Activated CD4-positive, alpha-beta T cell treated with anti-CD3 and anti-CD28 coated beads, Interleukin-2, amount 10 ng/mL, durations not matched to agents 24 days and 14 days (primary cell): ENCODE measurements at regions of chr3 and their contacts with region 1.

Region 1: GRCh38 chr3:56251343-56251945 is 216.8 kb downstream of the ERC2 start:
- DNase-seq: peak; percentile 71
- H3K4me3 Mint-ChIP-seq: no peak overlapping the region
- H3K27ac Mint-ChIP-seq: no peak overlapping the region
- H3K4me1 Mint-ChIP-seq: peaks cover 1% of the 10 kb centered on the region
- H3K27me3 Mint-ChIP-seq: peaks cover 12% of the 10 kb centered on the region

Region 2: DNA sequence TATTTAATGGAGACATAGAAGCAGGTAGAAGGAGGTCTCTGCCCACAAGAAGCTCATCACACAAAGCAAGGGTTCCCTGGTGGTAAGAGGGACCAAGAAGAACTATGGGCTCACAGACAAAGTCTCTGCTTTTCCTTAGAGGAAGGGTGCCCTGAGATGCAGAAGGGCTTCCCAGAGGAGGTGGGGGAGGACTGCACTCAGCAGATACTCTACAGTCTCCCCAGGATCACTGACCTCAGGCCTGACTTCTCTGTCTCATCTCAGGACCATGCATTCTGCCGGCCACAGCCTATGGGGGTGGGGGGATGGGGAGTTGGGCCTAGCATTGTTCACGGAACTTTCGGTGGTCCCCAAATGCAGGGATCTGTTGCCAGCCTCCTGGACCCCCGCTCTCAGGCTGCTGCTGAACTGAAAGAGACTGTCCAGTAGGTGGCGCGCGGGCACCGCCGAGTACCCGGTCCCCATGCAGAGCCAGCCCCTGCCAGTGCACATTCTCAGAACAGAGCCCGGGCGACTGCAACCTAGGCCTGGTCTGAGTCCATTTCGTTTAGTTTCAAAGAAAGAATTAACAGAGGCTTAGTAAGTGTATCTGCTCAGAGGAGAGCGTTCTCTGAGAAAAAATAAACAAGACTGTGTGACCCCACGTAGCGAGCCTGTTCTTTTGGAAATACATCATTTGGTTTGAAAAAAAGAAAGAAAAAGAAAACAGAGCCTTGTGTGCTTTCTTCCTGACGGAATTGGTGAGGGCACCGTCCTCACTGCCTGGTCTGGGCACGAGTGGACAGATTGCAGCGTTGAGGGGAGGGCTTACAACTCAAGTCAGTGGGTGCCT is 1397.7 kb before region 1 on chr3:
- intact Hi-C with region 1: loop called (anchors 5 kb)
- DNase-seq: peak; percentile 81
- H3K4me3 Mint-ChIP-seq: no peak overlapping the region
- H3K27ac Mint-ChIP-seq: no peak overlapping the region
- H3K4me1 Mint-ChIP-seq: no peaks in the 10 kb centered on the region
- H3K27me3 Mint-ChIP-seq: no peaks in the 10 kb centered on the region

Region 3: GRCh38 chr3:55434789-55435188 is 816.7 kb before region 1 on chr3:
- intact Hi-C with region 1: loop called (anchors 5 kb)
- DNase-seq: peak; percentile 64
- H3K4me3 Mint-ChIP-seq: no peak overlapping the region
- H3K27ac Mint-ChIP-seq: no peak overlapping the region
- H3K4me1 Mint-ChIP-seq: no peaks in the 10 kb centered on the region
- H3K27me3 Mint-ChIP-seq: no peaks in the 10 kb centered on the region

Region 4: GRCh38 chr3:55485211-55485791 is 766.1 kb before region 1 on chr3:
- intact Hi-C with region 1: loop called (anchors 2 kb)
- DNase-seq: peak; percentile 77
- H3K4me3 Mint-ChIP-seq: no peak overlapping the region
- H3K27ac Mint-ChIP-seq: no peak overlapping the region
- H3K4me1 Mint-ChIP-seq: peaks cover 9% of the 10 kb centered on the region
- H3K27me3 Mint-ChIP-seq: peaks cover 83% of the 10 kb centered on the region

Region 5: DNA sequence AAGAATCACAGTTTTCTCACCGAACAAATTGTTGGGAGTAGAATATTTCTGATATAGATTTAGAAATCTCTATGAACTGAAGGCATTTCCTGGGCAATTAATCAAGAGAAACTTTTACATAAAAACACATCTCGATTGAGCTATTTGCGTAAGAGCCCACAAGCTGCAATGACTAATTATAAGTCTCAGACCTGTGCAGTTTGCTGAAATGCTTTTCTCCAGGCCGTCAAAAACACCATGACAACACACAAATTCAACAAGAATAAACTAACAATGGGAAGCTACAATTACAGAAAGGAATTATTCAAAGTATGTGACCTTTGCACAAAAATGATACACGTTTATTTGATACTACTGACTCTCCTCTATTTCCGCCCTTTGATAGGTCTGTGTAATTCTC is 283.1 kb before region 1 on chr3:
- intact Hi-C with region 1: no loop called
- DNase-seq: no peak
- H3K4me3 Mint-ChIP-seq: no peak overlapping the region
- H3K27ac Mint-ChIP-seq: no peak overlapping the region
- H3K4me1 Mint-ChIP-seq: no peaks in the 10 kb centered on the region
- H3K27me3 Mint-ChIP-seq: no peaks in the 10 kb centered on the region

Region 6: DNA sequence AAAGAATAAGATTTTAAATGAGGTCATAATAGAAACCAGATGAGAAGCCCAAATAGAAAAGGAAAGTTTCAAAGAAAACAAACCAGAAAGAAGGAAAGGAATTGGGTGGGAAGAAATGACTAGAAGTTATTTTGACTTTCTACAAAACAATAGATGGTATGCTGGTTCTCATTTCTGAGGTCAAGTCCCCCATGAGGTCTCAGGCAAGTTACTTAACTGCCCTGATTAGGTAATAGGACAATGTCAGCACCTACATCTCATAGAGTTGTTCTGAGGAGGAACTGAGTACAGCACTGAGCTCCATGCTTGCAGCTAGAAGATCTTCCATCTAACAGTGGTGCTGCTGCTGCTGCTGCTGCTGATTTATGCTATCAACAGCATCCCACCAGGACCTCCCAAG is 30.9 kb after region 1 on chr3:
- intact Hi-C with region 1: no loop called
- DNase-seq: no peak
- H3K4me3 Mint-ChIP-seq: no peak overlapping the region
- H3K27ac Mint-ChIP-seq: no peak overlapping the region
- H3K4me1 Mint-ChIP-seq: no peaks in the 10 kb centered on the region
- H3K27me3 Mint-ChIP-seq: peaks cover 10% of the 10 kb centered on the region